Heart left ventricle (tissue), 16 donors: ENCODE measurements at regions of chrX and their contacts with region 1.

Region 1: DNA sequence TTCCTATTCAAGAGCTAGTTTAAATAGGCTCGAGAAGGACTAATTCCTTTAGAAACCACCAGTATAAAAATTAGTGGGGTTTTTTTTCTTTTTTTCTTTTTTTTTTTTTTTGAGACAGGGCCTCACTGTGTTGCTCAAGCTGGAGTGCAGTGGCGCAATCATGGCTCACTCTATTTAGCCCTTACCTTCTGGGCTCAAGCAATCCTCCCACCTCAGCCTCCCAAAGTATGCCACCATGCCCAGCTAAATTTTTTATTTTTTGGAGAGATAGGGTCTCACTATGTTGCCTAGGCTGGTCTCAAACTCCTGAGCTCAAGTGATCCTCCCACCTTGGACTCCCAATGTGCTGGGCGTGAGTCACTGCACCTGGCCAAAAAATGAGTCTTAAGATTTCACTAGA is 52.8 kb downstream of the APOO start:
- DNase-seq: no peak
- ATAC-seq: no peak
- H3K4me3 ChIP-seq: no peak overlapping the region
- H3K27ac ChIP-seq: no peak overlapping the region
- H3K4me1 ChIP-seq: peaks cover 0 to 4% (median 0%) of the 10 kb centered on the region in 12 donors
- H3K27me3 ChIP-seq: peaks cover 0 to under 1% (median 0%) of the 10 kb centered on the region in 9 donors
- CTCF ChIP-seq: no peak
- POLR2A ChIP-seq: no peak

Region 2: GRCh38 chrX:23803931-23804381 is 51.0 kb before region 1 on chrX:
- intact Hi-C with region 1: loop called in 2 of 10 experiments (anchors 10 kb)
- DNase-seq: peak in 3 of 5 donors; percentile 44 to 62 (median 53)
- ATAC-seq: peak; percentile 81 to 93 (median 88)
- H3K4me3 ChIP-seq: no peak overlapping the region
- H3K27ac ChIP-seq: peak overlapping the region in 11 of 12 donors; percentile 4 to 84 (median 72)
- H3K4me1 ChIP-seq: peaks cover 0 to 18% (median 2%) of the 10 kb centered on the region in 12 donors
- H3K27me3 ChIP-seq: peaks cover 0 to 4% (median 0%) of the 10 kb centered on the region in 9 donors
- CTCF ChIP-seq: no peak
- POLR2A ChIP-seq: no peak